IMR-90 (cell line): ENCODE measurements at regions of chr2 and their contacts with region 1.

Region 1: DNA sequence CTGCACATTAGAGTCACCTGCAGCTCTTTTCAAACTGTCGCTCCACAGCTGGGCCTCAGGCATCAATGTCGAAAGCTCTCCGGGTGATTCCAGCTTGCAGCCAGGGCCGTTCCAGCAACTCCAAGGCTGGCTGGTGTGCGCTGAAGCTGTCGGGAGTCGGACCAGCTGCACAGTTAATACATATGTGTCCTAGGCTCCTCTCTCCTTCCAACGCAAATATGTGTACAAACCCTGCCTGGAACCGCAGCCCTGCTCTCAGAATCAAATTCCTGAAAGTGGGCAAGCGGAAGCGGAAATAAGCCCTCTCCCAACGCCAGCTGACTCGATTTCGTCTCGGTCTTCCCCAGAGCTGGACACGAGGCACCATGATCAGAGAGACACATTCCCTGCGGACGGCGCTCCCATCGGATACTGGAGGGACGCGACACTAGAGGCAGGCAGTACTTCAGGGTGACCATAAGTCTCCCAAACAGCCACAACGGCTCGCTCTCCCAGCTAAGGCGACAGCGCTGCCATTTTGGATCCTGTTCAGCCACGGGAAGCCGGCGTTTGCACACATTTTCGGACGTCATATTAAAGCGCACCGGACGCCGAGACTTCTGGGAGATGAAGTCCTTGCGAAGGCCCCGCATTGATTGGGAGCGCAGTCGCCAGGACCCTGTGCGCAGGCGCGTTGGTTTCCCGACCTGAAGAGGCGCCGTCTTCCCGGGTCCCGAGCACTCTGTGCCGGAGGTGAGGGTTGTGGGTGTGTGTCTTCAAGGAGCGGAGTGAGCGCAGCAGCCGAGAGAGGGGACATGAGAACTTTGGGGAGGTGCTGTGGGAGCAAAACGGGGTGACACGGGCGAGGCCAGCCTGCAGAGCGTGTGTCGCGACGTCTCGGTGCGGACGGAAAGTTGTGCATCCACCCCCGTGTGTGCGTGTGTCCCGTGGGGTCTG is at the start of gene ZNF2:
- DNase-seq: peak; percentile 98
- ATAC-seq: peak; percentile 98
- H3K4me3 ChIP-seq: peak within 1 kb of the TSS; percentile 77
- H3K27ac ChIP-seq: peak within 1 kb of the TSS; percentile 97
- H3K4me1 ChIP-seq: no peaks in the 10 kb centered on the region
- H3K27me3 ChIP-seq: no peaks in the 10 kb centered on the region
- CTCF ChIP-seq: no peak
- POLR2A ChIP-seq: peak; percentile 93
- RAD21 ChIP-seq: no peak
- total RNA-seq, gene ZNF2: 7.3 and 7.8 TPM in 2 replicates

Region 2: GRCh38 chr2:95121407-95122196 is 43.8 kb before region 1 on chr2 and contains the start of gene MRPS5:
- CTCF ChIA-PET with region 1: no interaction called
- POLR2A ChIA-PET with region 1: no interaction called
- dilution Hi-C with region 1: no loop called
- in situ Hi-C with region 1: no loop called
- intact Hi-C with region 1: loop called (anchors 5 kb)
- DNase-seq: peak; percentile 50
- ATAC-seq: peak; percentile 99
- H3K4me3 ChIP-seq: peak within 1 kb of the TSS; percentile 91
- H3K27ac ChIP-seq: peak within 1 kb of the TSS; percentile 99
- H3K4me1 ChIP-seq: no peaks in the 10 kb centered on the region
- H3K27me3 ChIP-seq: no peaks in the 10 kb centered on the region
- CTCF ChIP-seq: 0 out of 2 replicates have a peak, but pooled peaks have one; percentile 10
- POLR2A ChIP-seq: peak; percentile 58
- RAD21 ChIP-seq: no peak
- total RNA-seq, gene MRPS5: 27.6 and 35.8 TPM in 2 replicates

Region 3: DNA sequence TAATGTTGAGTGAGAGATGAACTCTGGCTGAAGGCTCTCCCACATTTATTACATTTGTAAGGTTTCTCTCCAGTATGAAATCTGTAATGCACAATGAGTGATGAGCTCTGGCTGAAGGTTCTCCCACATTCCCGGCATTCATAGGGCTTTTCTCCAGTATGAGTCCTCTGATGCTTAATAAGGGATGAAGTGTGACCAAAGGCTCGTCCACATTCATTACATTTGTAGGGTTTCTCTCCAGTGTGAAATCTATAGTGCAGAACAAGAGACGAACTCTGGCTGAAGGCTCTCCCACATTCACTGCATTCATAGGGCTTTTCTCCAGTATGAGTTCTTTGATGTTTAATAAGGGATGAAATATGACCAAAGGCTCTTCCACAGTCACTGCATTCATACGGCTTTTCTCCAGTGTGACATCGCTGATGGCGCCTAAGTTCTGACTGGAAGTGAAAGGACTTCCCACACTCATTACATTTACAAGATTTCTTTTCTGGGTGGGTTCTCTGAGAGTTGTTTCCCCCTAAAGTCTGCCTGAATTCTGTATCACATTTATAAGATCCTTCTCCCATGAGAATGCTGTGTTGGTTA is 15.9 kb before region 1 on chr2:
- CTCF ChIA-PET with region 1: no interaction called
- POLR2A ChIA-PET with region 1: no interaction called
- dilution Hi-C with region 1: no loop called
- in situ Hi-C with region 1: no loop called
- intact Hi-C with region 1: no loop called
- DNase-seq: no peak
- ATAC-seq: no peak
- H3K4me3 ChIP-seq: no peak overlapping the region
- H3K27ac ChIP-seq: no peak overlapping the region
- H3K4me1 ChIP-seq: no peaks in the 10 kb centered on the region
- H3K27me3 ChIP-seq: no peaks in the 10 kb centered on the region
- CTCF ChIP-seq: no peak
- POLR2A ChIP-seq: no peak
- RAD21 ChIP-seq: no peak

Region 4: DNA sequence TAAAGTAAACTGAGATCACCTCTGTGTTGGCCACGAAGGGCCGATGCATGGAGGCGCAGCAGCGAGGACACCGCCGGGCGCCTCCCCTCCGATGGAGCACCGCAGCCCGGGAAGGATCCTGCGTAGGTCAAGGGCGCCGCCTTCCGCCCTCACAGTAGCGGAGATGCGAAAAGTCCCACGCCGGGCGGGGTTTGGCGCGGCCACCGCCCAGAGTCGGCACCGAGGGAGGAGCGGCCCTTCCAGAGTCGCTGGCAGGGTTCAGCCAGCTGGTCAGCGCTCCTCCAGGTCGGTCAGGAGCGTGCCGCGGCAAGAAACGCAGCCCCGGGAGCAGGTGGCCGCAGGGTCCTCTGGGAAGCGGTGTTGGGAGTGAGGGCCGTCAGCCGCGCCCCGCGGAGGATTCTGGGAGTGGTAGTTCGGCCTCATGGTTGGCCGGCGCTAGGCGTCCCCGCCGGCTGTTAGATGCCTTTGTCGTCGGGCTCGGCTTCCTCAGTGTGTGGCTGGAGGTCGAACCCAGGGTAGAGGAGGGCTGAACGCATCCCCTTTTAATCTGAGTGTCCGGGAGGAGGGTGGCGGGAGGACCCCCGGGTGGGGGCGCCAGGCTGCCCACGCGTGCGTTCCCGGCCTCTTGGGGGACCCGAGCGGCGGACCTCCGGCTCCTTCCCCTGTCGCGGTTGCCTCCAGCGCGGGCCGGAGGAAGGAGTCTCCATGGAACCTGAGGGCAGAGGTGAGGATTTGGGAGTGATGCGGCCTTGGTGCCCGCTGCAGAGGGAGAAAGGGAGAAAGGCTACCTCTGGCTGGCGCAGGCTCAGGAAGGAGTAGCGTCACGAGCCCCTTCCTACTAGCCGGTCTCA is 41.9 kb after region 1 on chr2 and contains the start of gene ZNF892:
- CTCF ChIA-PET with region 1: no interaction called
- POLR2A ChIA-PET with region 1: no interaction called
- dilution Hi-C with region 1: no loop called
- in situ Hi-C with region 1: no loop called
- intact Hi-C with region 1: loop called (anchors 5 kb)
- DNase-seq: peak; percentile 82
- ATAC-seq: peak; percentile 98
- H3K4me3 ChIP-seq: peak within 1 kb of the TSS; percentile 91
- H3K27ac ChIP-seq: peak within 1 kb of the TSS; percentile 53
- H3K4me1 ChIP-seq: no peaks in the 10 kb centered on the region
- H3K27me3 ChIP-seq: no peaks in the 10 kb centered on the region
- CTCF ChIP-seq: peak; percentile 43
- POLR2A ChIP-seq: peak; percentile 26; the same call in 1 of the 2 replicates
- RAD21 ChIP-seq: peak; percentile 52
- total RNA-seq, gene ZNF892: 2.2 and 2.7 TPM in 2 replicates

Region 5: DNA sequence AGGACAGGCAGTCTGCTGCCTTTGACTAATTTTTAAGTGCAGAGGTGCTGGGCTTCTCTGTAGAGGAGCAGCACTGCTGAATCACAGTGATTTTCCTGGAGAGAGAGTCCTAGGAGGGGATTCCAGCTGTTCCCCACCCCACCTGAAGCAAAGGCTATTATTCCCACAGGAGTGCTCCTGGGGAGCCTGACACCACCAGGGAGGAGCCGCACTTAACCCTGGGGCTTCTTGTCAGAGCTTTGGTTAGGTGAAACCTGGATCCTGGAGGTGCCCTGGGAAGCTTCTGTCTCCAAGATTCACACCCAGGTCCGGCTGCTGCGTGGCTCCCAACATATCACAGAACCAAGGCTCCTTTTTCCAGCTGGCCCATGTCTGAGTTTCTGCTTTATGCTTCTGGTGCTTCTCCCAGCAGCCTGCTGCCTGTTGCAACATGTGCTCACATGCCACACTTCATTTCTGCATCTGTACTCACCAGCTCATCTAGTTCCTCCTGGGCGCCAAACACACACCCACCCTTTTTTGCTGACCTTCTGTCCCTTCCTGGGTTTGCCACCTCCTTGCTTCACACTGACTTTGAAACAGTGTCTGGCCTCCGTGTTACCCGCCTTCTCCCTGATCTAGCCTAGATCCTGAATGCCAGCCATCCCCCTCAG is 94.5 kb after region 1 on chr2:
- CTCF ChIA-PET with region 1: no interaction called
- POLR2A ChIA-PET with region 1: no interaction called
- dilution Hi-C with region 1: no loop called
- in situ Hi-C with region 1: no loop called
- intact Hi-C with region 1: no loop called
- DNase-seq: peak; percentile 7
- ATAC-seq: no peak
- H3K4me3 ChIP-seq: no peak overlapping the region
- H3K27ac ChIP-seq: no peak overlapping the region
- H3K4me1 ChIP-seq: no peaks in the 10 kb centered on the region
- H3K27me3 ChIP-seq: no peaks in the 10 kb centered on the region
- CTCF ChIP-seq: no peak
- POLR2A ChIP-seq: no peak
- RAD21 ChIP-seq: no peak